ENCODE measurements at regions of chr3 and their contacts with region 1.

Region 1: GRCh38 chr3:170128977-170129431 is 52.5 kb downstream of the PHC3 start:
- DNase-seq: no peak
- H3K4me3 Mint-ChIP-seq: peak overlapping the region; percentile 54
- H3K27ac Mint-ChIP-seq: peak overlapping the region; percentile 74
- H3K4me1 Mint-ChIP-seq: peaks cover 17% of the 10 kb centered on the region
- H3K27me3 Mint-ChIP-seq: no peaks in the 10 kb centered on the region

Region 2: GRCh38 chr3:170144437-170144843 is 15.4 kb after region 1 on chr3:
- intact Hi-C with region 1: loop called (anchors 2 kb)
- DNase-seq: no peak
- H3K4me3 Mint-ChIP-seq: no peak overlapping the region
- H3K27ac Mint-ChIP-seq: no peak overlapping the region
- H3K4me1 Mint-ChIP-seq: peaks cover 13% of the 10 kb centered on the region
- H3K27me3 Mint-ChIP-seq: no peaks in the 10 kb centered on the region

Region 3: GRCh38 chr3:170171563-170171962 is 42.6 kb after region 1 on chr3:
- intact Hi-C with region 1: loop called (anchors 5 kb)
- DNase-seq: no peak
- H3K4me3 Mint-ChIP-seq: peak overlapping the region; percentile 50
- H3K27ac Mint-ChIP-seq: peak overlapping the region; percentile 43
- H3K4me1 Mint-ChIP-seq: peaks cover 49% of the 10 kb centered on the region
- H3K27me3 Mint-ChIP-seq: no peaks in the 10 kb centered on the region

Measured in activated T-helper 1 cell treated with anti-CD3 and anti-CD28 coated beads, Interleukin-12 subunit alpha, Interleukin-12 subunit beta, Interleukin-2, Interleukin-4 antibody, amounts not matched to agents 30 ng/mL and 10 ng/mL and 1 ng/mL, durations not matched to agents 14 hours and 24 hours and 36 hours (primary cell).